ENCODE measurements at regions of chrX and their contacts with region 1.

Region 1: DNA sequence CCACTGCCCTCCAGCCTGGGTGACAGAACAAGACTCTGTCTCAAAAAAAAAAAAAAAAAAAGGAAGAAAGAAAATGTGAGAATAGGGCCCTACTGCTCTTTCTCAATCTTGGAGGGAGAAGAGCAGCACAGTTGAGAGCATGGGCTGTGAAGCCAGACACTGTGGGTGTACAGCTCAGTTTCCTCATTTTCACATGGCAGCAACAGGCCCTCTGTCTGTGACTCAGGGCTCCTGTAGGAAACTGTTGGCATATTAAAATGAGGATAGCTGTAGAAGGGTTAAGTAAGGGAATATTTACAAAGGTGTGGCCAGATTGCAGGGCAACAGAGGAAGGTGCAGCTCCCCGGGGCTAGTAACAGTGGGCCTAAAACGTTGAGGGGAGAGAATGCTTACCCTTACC is 3.4 kb downstream of the AKAP14 start:
- DNase-seq: no peak
- ATAC-seq: no peak
- H3K4me3 Mint-ChIP-seq: no peak overlapping the region
- H3K27ac Mint-ChIP-seq: no peak overlapping the region
- H3K4me1 Mint-ChIP-seq: peaks cover 4% of the 10 kb centered on the region
- H3K27me3 Mint-ChIP-seq: no peaks in the 10 kb centered on the region
- CTCF ChIP-seq: no peak

Region 2: DNA sequence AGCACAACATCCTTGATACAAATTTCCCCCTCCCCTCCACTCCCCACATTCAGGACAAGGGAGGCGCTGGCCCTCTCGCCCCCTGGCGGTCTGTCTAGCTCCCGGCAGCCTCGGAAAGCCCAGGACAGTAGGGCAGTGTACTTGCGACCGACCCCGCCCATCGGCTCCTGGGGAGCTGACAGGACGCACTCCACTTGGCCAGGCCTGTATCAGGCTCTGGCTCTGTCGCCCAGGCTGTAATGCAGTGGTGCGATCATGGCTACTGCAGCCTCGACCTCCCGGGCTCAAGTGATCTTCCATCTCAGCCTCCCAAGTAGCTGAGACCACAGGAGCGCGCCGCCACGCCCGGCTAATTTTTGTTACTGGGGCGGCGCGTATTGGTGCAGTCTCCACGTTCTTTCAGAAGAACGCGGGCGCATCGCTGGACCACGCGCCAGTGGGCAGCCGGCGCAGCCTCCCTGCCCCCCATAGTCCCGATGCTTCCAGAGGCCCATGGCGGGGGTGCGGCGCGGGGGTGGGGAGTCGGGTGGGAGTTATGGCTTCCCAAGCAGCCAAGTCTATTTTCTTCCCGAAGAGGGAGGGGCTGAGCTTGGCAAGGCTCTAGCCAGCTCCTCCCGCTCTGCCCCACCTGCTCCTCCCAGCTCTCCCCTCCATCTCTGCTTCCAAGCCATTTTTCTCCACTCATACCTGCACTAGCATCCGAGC is 11.3 kb before region 1 on chrX:
- CTCF ChIA-PET with region 1: interaction called, 15 read pairs
- POLR2A ChIA-PET with region 1: interaction called, 3 read pairs
- DNase-seq: peak; percentile 86
- ATAC-seq: peak; percentile 96
- H3K4me3 Mint-ChIP-seq: peak overlapping the region; percentile 64
- H3K27ac Mint-ChIP-seq: no peak overlapping the region
- H3K4me1 Mint-ChIP-seq: no peaks in the 10 kb centered on the region
- H3K27me3 Mint-ChIP-seq: no peaks in the 10 kb centered on the region
- CTCF ChIP-seq: peak; percentile 64

Measured in WTC11 (cell line).